ENCODE measurements at regions of chr3 and their contacts with region 1.

Region 1: DNA sequence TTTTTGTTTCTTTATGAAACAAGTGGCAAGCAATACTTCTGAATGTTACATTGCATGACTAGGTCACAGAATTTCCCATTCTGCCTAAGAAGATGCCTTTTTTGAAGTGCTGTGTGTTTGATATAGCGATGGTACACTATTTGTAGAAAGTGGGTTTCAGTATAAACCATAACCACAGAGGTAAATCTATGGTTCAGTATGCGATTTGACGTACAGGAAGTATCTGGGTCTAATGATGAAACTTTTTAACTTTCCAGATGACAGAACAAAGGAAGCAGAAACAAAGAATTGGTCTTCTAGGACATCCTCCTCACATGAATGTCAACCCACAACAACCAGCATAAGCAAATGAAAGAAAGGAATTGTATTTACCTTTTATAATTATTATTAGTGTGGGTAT is 133.4 kb upstream of the BHLHE40 start:
- DNase-seq: no peak
- H3K4me3 ChIP-seq: no peak overlapping the region
- H3K27ac ChIP-seq: no peak overlapping the region
- H3K4me1 ChIP-seq: no peaks in the 10 kb centered on the region
- CTCF ChIP-seq: no peak

Region 2: DNA sequence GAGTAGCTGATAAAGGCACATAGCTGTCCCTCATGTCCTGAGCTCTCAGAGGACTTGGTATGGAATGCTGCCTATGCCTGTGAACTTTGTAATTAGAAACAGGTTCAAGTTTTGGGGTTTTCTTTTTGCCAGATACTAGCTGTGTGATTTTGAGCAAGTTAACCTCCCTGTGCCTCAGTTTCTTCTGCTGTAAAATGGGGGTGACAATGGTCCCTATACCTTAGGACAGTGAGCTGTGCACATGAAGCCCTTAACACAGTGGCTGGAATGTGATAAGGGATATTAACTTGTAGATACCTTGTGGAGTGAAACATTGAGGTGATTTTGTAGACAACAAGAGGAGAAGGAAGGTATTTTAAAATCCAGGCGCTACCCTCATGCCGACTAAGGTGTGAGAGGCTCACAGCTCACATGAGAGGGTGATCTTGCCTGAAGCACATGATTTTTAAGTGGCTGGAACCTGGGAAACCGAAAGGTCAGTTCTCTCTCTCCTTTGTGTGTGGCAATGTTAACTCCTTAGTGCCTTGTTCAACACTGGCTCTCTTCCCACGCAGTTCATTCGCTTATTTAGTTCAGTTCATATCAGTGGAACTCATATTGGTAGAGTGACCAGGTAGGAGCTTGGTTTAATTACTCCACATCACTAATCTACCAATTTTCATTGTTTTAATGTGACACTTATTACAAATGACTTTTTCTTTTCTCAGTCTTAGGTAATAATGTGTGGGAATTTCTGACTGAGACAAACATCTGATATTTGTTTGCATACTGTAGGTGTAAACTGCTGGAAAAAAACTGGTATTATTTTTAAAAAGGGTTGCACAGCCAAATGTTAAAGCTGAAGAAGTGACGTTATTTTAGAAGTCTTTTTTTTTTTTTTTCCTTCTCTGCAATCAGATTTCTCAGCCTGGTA is 116.6 kb before region 1 on chr3:
- CTCF ChIA-PET with region 1: no interaction called
- POLR2A ChIA-PET with region 1: interaction called, 13 read pairs
- intact Hi-C with region 1: no loop called
- DNase-seq: no peak
- H3K4me3 ChIP-seq: no peak overlapping the region
- H3K27ac ChIP-seq: no peak overlapping the region
- H3K4me1 ChIP-seq: no peaks in the 10 kb centered on the region
- CTCF ChIP-seq: no peak